Activated B cell treated with CpG ODN at 0.5 μM for 24 hours (primary cell): ENCODE measurements at regions of chr12 and their contacts with region 1.

Region 1: GRCh38 chr12:48851883-48852733 is at the start of gene DDX23:
- DNase-seq: peak; percentile 75
- ATAC-seq: peak; percentile 98
- H3K4me3 Mint-ChIP-seq: peak within 1 kb of the TSS; percentile 98
- H3K27ac Mint-ChIP-seq: peak within 1 kb of the TSS; percentile 93
- H3K4me1 Mint-ChIP-seq: peaks cover 36% of the 10 kb centered on the region
- H3K27me3 Mint-ChIP-seq: no peaks in the 10 kb centered on the region
- CTCF ChIP-seq: no peak
- total RNA-seq, gene DDX23: 116 and 118 TPM in 2 replicates

Region 2: DNA sequence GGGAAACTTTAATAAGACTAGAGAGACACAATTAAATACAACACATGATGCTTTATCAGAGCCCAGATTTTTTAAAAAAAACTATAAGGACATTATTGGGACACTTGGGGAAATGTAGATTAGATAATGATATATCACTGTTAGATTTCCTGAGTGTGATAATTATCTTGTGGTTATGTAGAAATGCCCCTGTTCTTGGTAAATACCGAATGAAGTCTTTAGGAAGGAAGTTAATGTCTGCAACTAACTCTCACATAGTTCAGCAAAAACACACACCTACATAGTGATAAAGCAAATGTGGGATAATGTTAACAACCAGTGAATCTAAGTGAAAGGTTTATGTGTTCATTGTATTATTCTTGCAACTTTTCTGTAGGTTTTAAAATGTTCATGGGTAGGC is 48.4 kb before region 1 on chr12:
- CTCF ChIA-PET with region 1: no interaction called
- POLR2A ChIA-PET with region 1: no interaction called
- intact Hi-C with region 1: no loop called
- DNase-seq: no peak
- ATAC-seq: no peak
- H3K4me3 Mint-ChIP-seq: no peak overlapping the region
- H3K27ac Mint-ChIP-seq: no peak overlapping the region
- H3K4me1 Mint-ChIP-seq: no peaks in the 10 kb centered on the region
- H3K27me3 Mint-ChIP-seq: peaks cover 6% of the 10 kb centered on the region
- CTCF ChIP-seq: no peak

Region 3: GRCh38 chr12:48865434-48866290 is 13.6 kb after region 1 on chr12 and contains the start of gene RND1:
- CTCF ChIA-PET with region 1: interaction called, 40 read pairs
- POLR2A ChIA-PET with region 1: interaction called, 53 read pairs
- intact Hi-C with region 1: loop called (anchors 1 kb)
- DNase-seq: peak; percentile 64
- ATAC-seq: peak; percentile 90
- H3K4me3 Mint-ChIP-seq: peak within 1 kb of the TSS; percentile 95
- H3K27ac Mint-ChIP-seq: peak within 1 kb of the TSS; percentile 78
- H3K4me1 Mint-ChIP-seq: peaks cover 27% of the 10 kb centered on the region
- H3K27me3 Mint-ChIP-seq: no peaks in the 10 kb centered on the region
- CTCF ChIP-seq: no peak
- total RNA-seq, gene RND1: 4.9 and 5.9 TPM in 2 replicates

Region 4: GRCh38 chr12:48936379-48936979 is 84.4 kb after region 1 on chr12:
- CTCF ChIA-PET with region 1: interaction called, 8 read pairs
- POLR2A ChIA-PET with region 1: interaction called, 3 read pairs
- intact Hi-C with region 1: loop called (anchors 1 kb)
- DNase-seq: peak; percentile 68
- ATAC-seq: peak; percentile 74
- H3K4me3 Mint-ChIP-seq: no peak overlapping the region
- H3K27ac Mint-ChIP-seq: no peak overlapping the region
- H3K4me1 Mint-ChIP-seq: peaks cover 36% of the 10 kb centered on the region
- H3K27me3 Mint-ChIP-seq: no peaks in the 10 kb centered on the region
- CTCF ChIP-seq: peak; percentile 26

Region 5: DNA sequence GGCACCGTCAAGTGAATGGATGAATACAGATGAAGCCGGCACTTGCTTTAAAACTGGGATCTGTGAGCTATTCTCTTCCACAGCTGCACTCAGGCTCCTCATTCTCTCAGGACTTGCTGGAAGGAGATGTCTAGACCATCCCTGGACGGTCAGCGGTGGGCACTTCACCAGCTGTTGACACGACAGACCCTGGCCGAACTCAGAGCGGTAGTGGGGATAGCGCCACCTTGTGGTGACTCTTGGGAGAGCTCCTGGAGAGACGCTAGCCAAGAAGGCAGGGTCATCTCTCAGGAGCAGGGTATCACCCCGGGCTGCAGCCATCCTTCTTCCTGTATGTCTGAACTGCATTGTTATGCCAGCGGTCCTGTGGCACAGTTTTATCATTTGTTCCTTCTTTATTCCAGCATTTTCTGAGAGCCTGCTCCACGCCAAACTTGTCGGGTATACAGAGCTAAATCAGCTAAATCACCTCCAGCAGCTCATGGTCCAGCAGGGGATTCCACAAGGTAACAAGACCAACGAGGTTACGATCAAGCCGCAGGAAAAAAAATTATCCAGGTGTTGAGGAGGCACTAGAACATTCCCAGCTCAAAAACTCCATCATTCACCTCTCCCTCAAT is 136.0 kb after region 1 on chr12:
- CTCF ChIA-PET with region 1: interaction called, 19 read pairs
- POLR2A ChIA-PET with region 1: interaction called, 7 read pairs
- intact Hi-C with region 1: loop called (anchors 2 kb)
- DNase-seq: peak; percentile 58
- ATAC-seq: peak; percentile 90
- H3K4me3 Mint-ChIP-seq: no peak overlapping the region
- H3K27ac Mint-ChIP-seq: no peak overlapping the region
- H3K4me1 Mint-ChIP-seq: no peaks in the 10 kb centered on the region
- H3K27me3 Mint-ChIP-seq: peaks cover 34% of the 10 kb centered on the region
- CTCF ChIP-seq: peak; percentile 31

Region 6: DNA sequence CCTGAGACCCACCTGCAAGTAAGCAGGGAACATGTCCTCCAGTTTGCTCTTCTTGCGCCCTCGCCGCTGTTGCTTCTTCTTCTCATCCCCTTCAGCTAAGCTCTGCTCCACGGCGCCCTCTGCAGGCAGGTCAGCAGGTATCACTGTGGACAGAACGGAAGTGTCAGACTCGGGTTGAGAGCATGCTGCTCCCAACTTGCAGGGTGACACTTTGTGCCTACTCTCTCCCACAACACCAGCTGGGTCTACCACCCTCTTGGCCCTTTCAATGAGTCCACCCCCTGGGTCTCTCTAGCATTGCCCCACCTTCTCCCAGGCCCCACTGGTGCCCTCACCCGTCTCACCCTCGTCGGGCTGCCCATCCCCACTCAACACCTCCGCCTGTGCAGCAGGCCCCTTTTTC is 191.7 kb after region 1 on chr12:
- CTCF ChIA-PET with region 1: interaction called, 3 read pairs
- POLR2A ChIA-PET with region 1: no interaction called
- intact Hi-C with region 1: loop called (anchors 1 kb)
- DNase-seq: peak; percentile 63
- ATAC-seq: peak; percentile 81
- H3K4me3 Mint-ChIP-seq: no peak overlapping the region
- H3K27ac Mint-ChIP-seq: no peak overlapping the region
- H3K4me1 Mint-ChIP-seq: no peaks in the 10 kb centered on the region
- H3K27me3 Mint-ChIP-seq: no peaks in the 10 kb centered on the region
- CTCF ChIP-seq: no peak